ENCODE measurements at regions of chr21 and their contacts with region 1.

Region 1: GRCh38 chr21:46097336-46098293 is at the start of gene COL6A2:
- DNase-seq: peak; percentile 80
- ATAC-seq: peak; percentile 89 to 92
- total RNA-seq, gene COL6A2: 330 to 350 TPM

Region 2: GRCh38 chr21:45973659-45974072 is 123.9 kb before region 1 on chr21:
- intact Hi-C with region 1: loop called (anchors 5 kb)
- DNase-seq: peak; percentile 90
- ATAC-seq: peak; percentile 56 to 60

Region 3: GRCh38 chr21:45981151-45982089 is 116.2 kb before region 1 on chr21 and contains the start of gene COL6A1:
- intact Hi-C with region 1: loop called in 1 of 2 experiments (anchors 5 kb)
- DNase-seq: peak; percentile 87
- ATAC-seq: peak; percentile 79 to 80
- total RNA-seq, gene COL6A1: 244 to 247 TPM